ENCODE measurements at regions of chr13 and their contacts with region 1.

Region 1: DNA sequence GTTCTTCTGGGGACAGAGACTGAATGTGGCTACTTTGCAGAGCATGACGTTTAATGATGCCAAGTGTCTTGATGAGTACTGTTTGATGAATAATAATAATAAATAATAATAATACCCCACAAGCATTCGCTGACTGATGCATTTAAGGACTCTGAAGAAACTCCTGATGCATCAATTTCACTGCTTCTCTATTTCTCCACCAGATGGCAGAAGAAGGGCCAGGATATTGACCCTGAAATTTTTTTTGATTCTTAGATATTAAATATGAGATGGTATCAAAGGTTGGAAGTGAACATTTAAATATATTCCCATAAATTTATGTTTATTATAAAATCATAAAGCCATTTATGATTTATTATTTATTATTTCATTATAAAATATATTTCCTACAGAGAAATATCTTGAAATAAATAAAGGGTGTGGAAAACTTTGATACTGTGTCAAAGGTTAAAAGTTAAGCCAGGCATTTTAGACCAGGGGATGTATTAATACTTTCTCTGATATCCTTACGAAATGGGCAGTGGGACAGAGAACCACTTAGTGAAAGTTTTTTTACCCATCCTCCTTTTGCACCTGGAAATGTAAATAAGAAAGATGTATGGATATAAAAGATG is 170.9 kb downstream of the LACC1 start:
- DNase-seq: peak in 1 of 2 experiments; percentile 28
- H3K4me3 ChIP-seq: no peak overlapping the region
- H3K4me1 ChIP-seq: peaks cover 4% of the 10 kb centered on the region
- H3K27me3 ChIP-seq: peaks cover 35% of the 10 kb centered on the region

Region 2: DNA sequence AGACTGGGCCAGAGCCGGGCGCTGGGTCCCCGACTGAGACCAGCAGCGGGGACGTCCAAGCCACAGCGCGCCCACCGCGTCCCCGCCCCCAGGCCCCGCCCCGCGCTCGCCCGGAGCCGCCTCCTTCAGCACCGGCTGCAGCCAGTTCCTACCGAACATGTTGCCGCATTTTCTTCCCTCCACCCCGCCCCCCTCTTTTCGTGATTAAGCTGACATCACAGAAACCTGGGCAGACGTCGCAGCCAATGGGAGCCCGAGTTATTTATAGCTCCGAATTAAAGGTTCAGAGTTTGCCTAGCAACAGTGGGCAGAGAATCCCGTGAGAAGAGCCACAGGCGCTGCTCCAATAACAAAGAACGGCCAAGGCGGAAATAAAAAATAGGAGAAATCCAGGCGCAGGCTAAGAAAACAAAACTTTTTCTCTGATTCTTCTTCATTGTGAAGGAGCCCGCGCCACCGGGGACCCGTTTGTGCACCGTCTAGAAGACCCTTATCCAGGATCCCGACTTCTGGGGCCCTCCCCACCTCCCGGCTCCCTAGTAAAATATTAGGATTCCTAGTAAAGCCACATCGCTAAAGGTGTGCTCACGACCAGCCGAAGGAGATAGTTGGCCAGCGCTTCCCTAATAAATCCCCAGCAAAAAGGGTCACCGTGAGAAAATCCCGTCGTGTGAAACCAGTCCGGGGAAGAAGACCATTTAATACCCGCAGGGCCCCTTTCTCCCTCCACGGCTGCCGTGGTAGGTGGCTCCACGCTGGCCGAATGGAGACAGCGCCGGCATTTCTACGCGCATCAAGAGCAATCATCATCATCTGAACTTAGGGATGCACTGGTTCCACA is 384.8 kb after region 1 on chr13:
- in situ Hi-C with region 1: loop called (anchors 25 kb)
- DNase-seq: peak; percentile 96 to 99
- H3K4me3 ChIP-seq: peak overlapping the region; percentile 55
- H3K4me1 ChIP-seq: peaks cover 12% of the 10 kb centered on the region
- H3K27me3 ChIP-seq: no peaks in the 10 kb centered on the region